Activated T-helper 2 cell treated with anti-CD3 and anti-CD28 coated beads, Interferon-gamma antibody, Interleukin-2, Interleukin-4, amounts not matched to agents 10 μg/mL and 5 μg/mL and 100 μg/mL, durations not matched to agents 14 hours and 24 hours and 36 hours (primary cell): ENCODE measurements at regions of chr11 and their contacts with region 1.

Region 1: GRCh38 chr11:17077520-17078401 is at the start of gene RPS13:
- DNase-seq: peak; percentile 95
- H3K4me3 Mint-ChIP-seq: peak within 1 kb of the TSS; percentile 100
- H3K27ac Mint-ChIP-seq: peak within 1 kb of the TSS; percentile 97
- H3K4me1 Mint-ChIP-seq: peaks cover 36% of the 10 kb centered on the region
- H3K27me3 Mint-ChIP-seq: no peaks in the 10 kb centered on the region
- total RNA-seq, gene RPS13: 1,360 and 1,371 TPM in 2 replicates

Region 2: DNA sequence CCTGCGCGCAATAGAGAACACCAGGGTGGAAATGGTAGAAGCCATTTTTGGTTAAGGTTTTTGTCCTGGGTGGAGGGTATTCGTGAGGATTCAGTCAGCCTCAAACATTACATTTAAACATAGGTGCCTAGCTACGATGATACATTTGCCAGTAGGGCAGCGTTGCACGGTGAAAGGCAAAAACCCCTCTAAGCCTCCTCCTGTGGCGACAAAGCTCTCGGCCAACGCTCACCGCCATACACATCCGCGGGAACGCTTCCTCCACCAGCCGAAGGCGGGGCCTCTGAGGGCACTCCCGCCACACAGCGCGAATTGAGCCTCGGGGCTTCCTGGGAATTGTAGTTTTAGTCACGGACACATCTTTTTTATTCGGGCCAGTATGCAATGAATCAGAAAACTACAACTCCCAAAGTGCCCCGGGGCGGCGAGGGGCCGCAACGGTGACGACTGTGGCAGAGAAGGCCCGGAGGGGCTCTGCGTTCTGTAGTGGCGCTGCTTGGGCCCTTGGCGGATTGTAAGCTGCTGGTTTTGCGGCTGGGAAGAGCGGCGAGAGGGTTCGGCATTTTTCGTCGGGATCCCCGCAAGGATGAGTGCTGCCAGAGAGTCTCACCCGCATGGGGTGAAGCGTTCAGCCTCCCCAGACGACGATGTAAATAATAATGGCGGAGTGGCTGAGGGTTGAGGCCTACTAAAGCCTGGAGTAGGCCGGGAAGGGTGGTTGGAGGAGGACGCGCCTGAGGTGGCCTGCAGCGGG is 339.4 kb before region 1 on chr11 and contains the start of gene C11orf58:
- intact Hi-C with region 1: loop called (anchors 1 kb)
- DNase-seq: peak; percentile 94
- H3K4me3 Mint-ChIP-seq: peak within 1 kb of the TSS; percentile 74
- H3K27ac Mint-ChIP-seq: peak within 1 kb of the TSS; percentile 73
- H3K4me1 Mint-ChIP-seq: peaks cover 20% of the 10 kb centered on the region
- H3K27me3 Mint-ChIP-seq: peaks cover 3% of the 10 kb centered on the region
- total RNA-seq, gene C11orf58: 135 and 162 TPM in 2 replicates

Region 3: DNA sequence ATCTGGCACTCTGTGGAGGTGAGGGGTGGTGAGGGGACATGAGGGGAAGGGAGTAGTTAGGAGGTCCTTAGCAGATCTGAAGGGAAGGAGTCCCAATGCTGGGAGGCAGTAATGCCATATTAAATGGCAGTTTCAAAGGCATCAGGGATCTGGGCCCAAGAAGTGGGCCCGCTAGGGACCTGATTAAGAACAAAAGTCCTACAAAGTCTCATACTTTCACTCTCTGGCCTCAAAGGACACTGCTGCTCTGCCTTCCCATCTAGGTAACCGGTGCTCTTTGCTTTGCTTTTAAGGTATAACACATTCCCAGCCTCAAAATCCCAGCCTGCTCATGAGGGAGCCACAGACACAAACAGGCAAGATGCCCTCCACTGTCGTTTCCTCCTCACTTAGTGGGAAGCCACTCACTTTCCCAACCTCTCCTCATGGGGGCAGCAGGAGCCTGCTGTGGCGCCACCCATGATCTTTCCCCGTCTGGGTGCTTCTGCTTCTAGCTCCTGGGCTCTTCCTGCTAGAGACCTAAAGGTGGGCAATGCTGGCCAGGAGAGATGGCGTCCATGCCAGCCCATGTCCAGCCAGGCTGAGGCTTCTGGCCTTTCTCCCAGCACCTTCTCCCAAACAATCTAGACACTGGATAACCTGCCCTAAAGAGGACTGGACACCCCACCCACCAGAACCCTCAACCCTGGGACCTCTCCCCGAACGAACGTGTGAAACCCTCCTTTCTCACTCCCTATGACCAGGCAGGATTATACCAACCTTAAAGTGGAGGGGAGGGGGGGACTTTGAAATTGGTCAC is 131.9 kb before region 1 on chr11:
- intact Hi-C with region 1: no loop called
- DNase-seq: no peak
- H3K4me3 Mint-ChIP-seq: no peak overlapping the region
- H3K27ac Mint-ChIP-seq: no peak overlapping the region
- H3K4me1 Mint-ChIP-seq: peaks cover 2% of the 10 kb centered on the region
- H3K27me3 Mint-ChIP-seq: peaks cover 6% of the 10 kb centered on the region

Region 4: DNA sequence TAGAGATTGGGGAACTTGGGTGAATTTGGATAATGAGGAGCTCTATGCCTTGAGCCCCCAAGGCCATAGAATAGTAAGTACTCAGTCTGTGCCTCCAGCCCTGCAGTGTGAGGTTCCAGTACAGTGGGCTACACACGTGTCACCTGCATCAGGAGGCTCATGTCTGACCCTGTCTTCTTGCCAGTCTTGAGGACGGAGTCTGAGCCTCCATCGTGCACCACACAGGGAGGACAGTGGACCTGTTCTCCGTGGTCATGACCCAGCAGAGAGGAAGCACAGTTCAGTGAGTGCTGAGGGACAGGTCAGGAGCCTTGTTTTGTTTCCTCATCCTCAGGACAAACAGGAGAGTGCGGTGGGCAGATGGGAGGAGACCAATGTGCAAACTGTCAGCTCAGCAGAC is 31.1 kb before region 1 on chr11:
- intact Hi-C with region 1: no loop called
- DNase-seq: no peak
- H3K4me3 Mint-ChIP-seq: no peak overlapping the region
- H3K27ac Mint-ChIP-seq: no peak overlapping the region
- H3K4me1 Mint-ChIP-seq: no peaks in the 10 kb centered on the region
- H3K27me3 Mint-ChIP-seq: no peaks in the 10 kb centered on the region

Region 5: DNA sequence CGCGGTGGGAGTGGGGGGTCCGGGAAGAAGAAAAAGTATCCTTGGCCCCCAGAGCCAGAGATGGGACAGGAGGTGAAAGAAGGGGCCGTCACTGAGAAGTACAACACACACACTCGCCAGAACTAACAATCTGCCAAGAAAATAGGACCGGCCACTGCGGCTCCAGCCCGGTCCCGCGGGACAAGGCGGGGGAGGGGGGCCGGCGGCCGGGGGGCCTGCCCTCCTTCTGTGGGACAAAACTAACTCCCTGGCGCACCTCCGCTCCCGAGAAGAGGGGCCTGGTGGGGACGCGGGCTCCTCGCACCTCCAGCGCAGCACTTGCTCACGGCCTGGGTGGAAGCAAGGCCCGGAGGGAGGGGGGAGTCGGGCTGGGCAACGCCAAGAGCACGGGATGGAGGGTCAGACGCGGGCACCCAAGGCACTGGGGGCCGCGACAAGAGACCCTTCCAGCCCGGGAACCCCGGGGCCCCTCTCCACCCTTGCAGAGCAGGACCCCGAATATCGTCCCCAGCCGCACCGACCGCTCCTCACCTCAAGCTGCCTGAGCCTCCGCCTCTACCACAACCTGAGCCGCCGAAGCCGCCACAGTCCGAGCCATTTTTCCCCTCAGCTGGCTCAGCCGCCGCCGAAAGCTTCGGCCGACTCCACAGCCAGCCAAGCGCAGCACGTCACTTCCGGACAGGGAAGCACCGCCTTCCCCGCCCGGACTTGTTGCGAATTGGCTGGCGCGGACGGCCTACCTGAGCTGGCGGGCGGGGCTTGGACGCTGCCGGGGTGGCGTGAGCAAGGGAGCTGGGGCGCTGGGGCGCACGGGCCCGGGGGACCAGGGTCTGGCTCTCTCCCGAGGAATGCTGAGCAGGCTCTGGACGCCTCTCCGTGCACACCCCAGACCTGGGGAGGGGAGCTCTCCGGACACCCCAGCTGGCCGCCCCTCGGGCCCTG is 129.8 kb after region 1 on chr11 and contains the start of gene PIK3C2A:
- intact Hi-C with region 1: loop called (anchors 1 kb)
- DNase-seq: peak; percentile 90
- H3K4me3 Mint-ChIP-seq: peak within 1 kb of the TSS; percentile 99
- H3K27ac Mint-ChIP-seq: peak within 1 kb of the TSS; percentile 95
- H3K4me1 Mint-ChIP-seq: peaks cover 32% of the 10 kb centered on the region
- H3K27me3 Mint-ChIP-seq: no peaks in the 10 kb centered on the region
- total RNA-seq, gene PIK3C2A: 29.3 and 32.5 TPM in 2 replicates

Region 6: DNA sequence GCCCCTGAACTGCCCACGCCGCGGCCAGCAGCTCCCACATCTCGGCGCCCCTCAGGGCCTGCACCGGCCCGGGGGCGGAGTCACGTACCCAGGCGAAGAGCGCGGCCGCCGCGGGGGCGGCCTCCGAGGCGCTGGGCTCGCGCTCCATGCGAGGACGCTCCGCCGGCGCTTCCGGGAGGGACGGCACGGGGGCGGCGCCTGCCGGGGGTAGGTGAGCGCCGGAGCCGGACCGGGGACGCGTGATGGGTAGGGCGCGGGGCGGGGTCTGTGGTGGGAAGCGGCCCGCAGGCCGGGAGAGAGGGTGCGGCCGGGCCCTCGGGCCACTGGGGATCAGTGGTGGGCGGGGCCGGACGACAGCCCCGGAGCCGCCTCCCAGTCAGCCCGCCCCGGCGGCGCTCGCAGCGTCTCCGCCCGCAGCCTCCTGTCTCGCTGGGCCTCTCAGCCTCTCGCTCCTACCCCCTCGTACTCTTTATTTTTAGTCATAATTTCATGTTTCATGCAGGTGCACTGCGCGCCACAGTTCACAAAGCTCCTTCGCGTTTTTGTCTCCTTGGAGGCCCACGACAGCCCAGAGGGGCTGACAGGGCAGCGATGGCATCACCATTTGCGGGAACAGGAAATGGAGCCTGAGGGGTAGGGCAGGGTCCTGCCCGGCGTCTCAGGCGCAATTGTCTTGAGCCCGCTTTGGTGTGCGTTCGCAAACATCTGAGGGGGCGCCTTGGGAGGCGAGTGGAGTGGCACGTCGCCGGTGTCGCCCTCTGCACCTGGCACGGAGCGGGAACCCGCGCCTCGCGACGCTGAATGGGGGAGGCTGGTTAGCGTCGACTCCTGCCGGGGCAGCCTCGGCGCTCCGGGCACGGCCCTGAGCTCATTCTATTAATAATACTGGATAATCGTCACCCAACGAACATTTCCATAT is 935.4 kb after region 1 on chr11 and contains the start of gene SERGEF:
- intact Hi-C with region 1: loop called (anchors 5 kb)
- DNase-seq: peak; percentile 93
- H3K4me3 Mint-ChIP-seq: peak within 1 kb of the TSS; percentile 99
- H3K27ac Mint-ChIP-seq: peak within 1 kb of the TSS; percentile 91
- H3K4me1 Mint-ChIP-seq: peaks cover 33% of the 10 kb centered on the region
- H3K27me3 Mint-ChIP-seq: no peaks in the 10 kb centered on the region
- total RNA-seq, gene SERGEF: 39.5 and 43.9 TPM in 2 replicates